Activated T-helper 2 cell treated with anti-CD3 and anti-CD28 coated beads, Interferon-gamma antibody, Interleukin-2, Interleukin-4, amounts not matched to agents 10 μg/mL and 5 μg/mL and 100 μg/mL, durations not matched to agents 14 hours and 24 hours and 36 hours (primary cell): ENCODE measurements at regions of chr14 and their contacts with region 1.

Region 1: GRCh38 chr14:25349269-25349668 is 299.3 kb upstream of the STXBP6 start:
- DNase-seq: no peak
- H3K4me3 Mint-ChIP-seq: no peak overlapping the region
- H3K27ac Mint-ChIP-seq: peak overlapping the region; percentile 51
- H3K4me1 Mint-ChIP-seq: no peaks in the 10 kb centered on the region
- H3K27me3 Mint-ChIP-seq: no peaks in the 10 kb centered on the region

Region 2: GRCh38 chr14:25400607-25401206 is 51.4 kb after region 1 on chr14:
- intact Hi-C with region 1: loop called (anchors 2 kb)
- DNase-seq: peak; percentile 11
- H3K4me3 Mint-ChIP-seq: no peak overlapping the region
- H3K27ac Mint-ChIP-seq: no peak overlapping the region
- H3K4me1 Mint-ChIP-seq: peaks cover 11% of the 10 kb centered on the region
- H3K27me3 Mint-ChIP-seq: no peaks in the 10 kb centered on the region